ENCODE measurements at regions of chr17 and their contacts with region 1.

Region 1: GRCh38 chr17:42120770-42121769 is at the start of gene KAT2A:
- DNase-seq: peak; percentile 82
- ATAC-seq: peak; percentile 89
- H3K4me3 ChIP-seq: peak within 1 kb of the TSS in 4 of 5 experiments; percentile 40 to 79 (median 58)
- H3K4me3 Mint-ChIP-seq: peak within 1 kb of the TSS; percentile 72
- H3K27ac ChIP-seq: no peak within 1 kb of the TSS
- H3K27ac Mint-ChIP-seq: peak within 1 kb of the TSS; percentile 59
- H3K4me1 ChIP-seq: peaks cover 14 to 26% of the 10 kb centered on the region in 2 donors
- H3K4me1 Mint-ChIP-seq: peaks cover 28% of the 10 kb centered on the region
- H3K27me3 ChIP-seq: no peaks in the 10 kb centered on the region
- H3K27me3 Mint-ChIP-seq: no peaks in the 10 kb centered on the region
- CTCF ChIP-seq: no peak
- total RNA-seq, gene KAT2A: 61.6 and 66.3 TPM in 2 replicates

Region 2: DNA sequence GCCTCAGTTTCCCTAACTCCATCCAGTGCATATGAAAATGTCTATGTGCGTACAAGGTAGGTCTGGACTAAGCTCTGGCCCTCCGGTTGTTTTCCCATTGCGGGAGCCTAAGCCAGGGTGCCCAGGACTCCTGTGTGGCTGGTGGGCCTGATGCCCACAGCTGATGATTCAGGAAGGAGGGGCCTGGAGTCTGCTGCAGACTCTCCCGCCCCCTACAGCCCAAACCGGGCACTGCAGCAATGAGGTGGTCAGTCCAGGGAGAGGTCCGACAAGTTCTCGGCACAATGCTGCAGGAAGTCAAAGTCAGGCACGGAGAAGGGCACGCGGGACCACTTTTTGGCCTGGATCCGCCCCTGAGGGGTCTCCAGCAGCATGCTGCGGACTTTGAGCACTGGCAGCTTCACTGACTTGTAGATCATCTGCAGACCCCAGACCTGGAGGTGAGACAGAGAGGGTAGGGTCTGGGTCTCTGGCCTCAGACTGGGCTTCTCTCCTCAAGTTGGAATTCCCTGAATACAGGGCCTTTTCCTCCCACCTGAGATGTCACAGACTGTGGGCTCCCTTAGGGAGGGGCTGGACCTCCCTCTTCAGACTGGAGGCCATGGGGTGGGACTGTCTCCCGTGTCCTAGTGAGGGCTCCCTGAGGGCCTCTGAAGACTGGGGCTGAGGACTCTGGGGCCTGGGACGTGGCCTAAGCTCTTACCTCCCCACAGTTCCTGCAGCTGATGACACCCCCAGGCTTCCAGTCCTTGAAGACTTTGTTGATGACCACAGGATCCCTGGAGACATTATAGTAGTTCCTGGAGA is 19.4 kb before region 1 on chr17:
- CTCF ChIA-PET with region 1: interaction called, 12 read pairs
- POLR2A ChIA-PET with region 1: no interaction called
- intact Hi-C with region 1: no loop called
- DNase-seq: peak; percentile 59
- ATAC-seq: peak; percentile 59
- H3K4me3 ChIP-seq: no peak overlapping the region
- H3K4me3 Mint-ChIP-seq: no peak overlapping the region
- H3K27ac ChIP-seq: no peak overlapping the region
- H3K27ac Mint-ChIP-seq: no peak overlapping the region
- H3K4me1 ChIP-seq: peaks cover 11 to 17% of the 10 kb centered on the region in 2 donors
- H3K4me1 Mint-ChIP-seq: peaks cover 9% of the 10 kb centered on the region
- H3K27me3 ChIP-seq: peaks cover 0 to 15% (median 9%) of the 10 kb centered on the region in 4 experiments
- H3K27me3 Mint-ChIP-seq: peaks cover 3% of the 10 kb centered on the region
- CTCF ChIP-seq: peak; percentile 78

Region 3: GRCh38 chr17:42132941-42133340 is 11.9 kb after region 1 on chr17:
- CTCF ChIA-PET with region 1: interaction called, 7 read pairs
- POLR2A ChIA-PET with region 1: interaction called, 6 read pairs
- intact Hi-C with region 1: loop called (anchors 1 kb)
- DNase-seq: no peak
- ATAC-seq: peak; percentile 48
- H3K4me3 ChIP-seq: peak overlapping the region in 3 of 5 experiments; percentile 15 to 29 (median 15)
- H3K4me3 Mint-ChIP-seq: peak overlapping the region; percentile 54
- H3K27ac ChIP-seq: peak overlapping the region; percentile 65 to 75
- H3K27ac Mint-ChIP-seq: peak overlapping the region; percentile 93
- H3K4me1 ChIP-seq: peaks cover 58 to 64% of the 10 kb centered on the region in 2 donors
- H3K4me1 Mint-ChIP-seq: peaks cover 57% of the 10 kb centered on the region
- H3K27me3 ChIP-seq: no peaks in the 10 kb centered on the region
- H3K27me3 Mint-ChIP-seq: no peaks in the 10 kb centered on the region
- CTCF ChIP-seq: no peak

Region 4: DNA sequence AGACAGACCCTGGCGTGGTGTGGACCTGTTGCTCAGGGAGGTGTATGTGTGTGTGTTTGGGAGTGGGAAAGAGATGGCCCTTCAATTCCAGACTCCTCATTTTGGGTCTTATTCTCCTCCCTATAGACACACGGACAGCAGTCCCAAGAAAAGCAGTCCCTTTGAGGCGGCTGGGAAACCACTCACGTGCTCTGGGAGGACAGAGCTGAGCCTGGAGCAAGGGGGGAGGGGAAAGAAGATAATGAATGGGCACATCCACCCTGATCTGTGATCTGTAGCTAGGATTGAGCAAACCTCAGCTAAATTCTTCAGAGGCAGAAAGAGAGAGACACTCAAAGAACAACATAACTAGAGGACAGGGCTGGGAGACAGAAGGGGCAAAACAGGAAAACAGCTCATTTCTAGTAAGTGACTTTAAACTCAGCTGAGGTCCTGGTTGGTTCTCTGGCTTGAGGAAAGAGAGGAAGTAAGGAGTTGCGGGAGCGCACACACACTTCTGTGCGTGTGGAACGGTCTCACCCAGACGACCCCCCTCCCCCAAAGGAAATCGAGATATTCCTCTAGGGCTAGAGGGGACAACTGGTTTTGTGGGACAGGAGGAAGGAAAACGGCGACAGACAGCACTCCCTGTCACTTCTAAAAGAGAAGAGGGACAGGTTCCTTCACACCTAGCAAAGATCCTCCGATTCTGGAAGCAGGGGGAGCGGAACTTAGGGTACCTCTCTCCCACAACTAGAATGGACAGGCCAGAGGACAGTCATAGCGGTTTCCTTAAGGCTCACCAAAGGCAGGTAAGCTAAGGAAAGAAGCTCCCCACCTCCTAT is 33.1 kb after region 1 on chr17:
- CTCF ChIA-PET with region 1: interaction called, 6 read pairs
- POLR2A ChIA-PET with region 1: no interaction called
- intact Hi-C with region 1: loop called (anchors 1 kb)
- DNase-seq: no peak
- ATAC-seq: no peak
- H3K4me3 ChIP-seq: peak overlapping the region; percentile 91 to 100 (median 99)
- H3K4me3 Mint-ChIP-seq: peak overlapping the region; percentile 94
- H3K27ac ChIP-seq: peak overlapping the region; percentile 74 to 94
- H3K27ac Mint-ChIP-seq: peak overlapping the region; percentile 96
- H3K4me1 ChIP-seq: peaks cover 14 to 23% of the 10 kb centered on the region in 2 donors
- H3K4me1 Mint-ChIP-seq: peaks cover 34% of the 10 kb centered on the region
- H3K27me3 ChIP-seq: no peaks in the 10 kb centered on the region
- H3K27me3 Mint-ChIP-seq: no peaks in the 10 kb centered on the region
- CTCF ChIP-seq: no peak